Sigmoid colon (tissue), 7 donors: ENCODE measurements at regions of chr2 and their contacts with region 1.

Region 1: GRCh38 chr2:205892251-205892655 is 193.7 kb downstream of the INO80D start:
- DNase-seq: peak; percentile 88
- H3K4me3 ChIP-seq: peak overlapping the region in 1 of 4 donors; percentile 12
- H3K27ac ChIP-seq: peak overlapping the region; percentile 43 to 77 (median 74)
- H3K4me1 ChIP-seq: peaks cover 0 to 43% (median 18%) of the 10 kb centered on the region in 4 donors
- H3K27me3 ChIP-seq: no peaks in the 10 kb centered on the region
- CTCF ChIP-seq: no peak
- EP300 ChIP-seq: no peak
- POLR2A ChIP-seq: no peak

Region 2: DNA sequence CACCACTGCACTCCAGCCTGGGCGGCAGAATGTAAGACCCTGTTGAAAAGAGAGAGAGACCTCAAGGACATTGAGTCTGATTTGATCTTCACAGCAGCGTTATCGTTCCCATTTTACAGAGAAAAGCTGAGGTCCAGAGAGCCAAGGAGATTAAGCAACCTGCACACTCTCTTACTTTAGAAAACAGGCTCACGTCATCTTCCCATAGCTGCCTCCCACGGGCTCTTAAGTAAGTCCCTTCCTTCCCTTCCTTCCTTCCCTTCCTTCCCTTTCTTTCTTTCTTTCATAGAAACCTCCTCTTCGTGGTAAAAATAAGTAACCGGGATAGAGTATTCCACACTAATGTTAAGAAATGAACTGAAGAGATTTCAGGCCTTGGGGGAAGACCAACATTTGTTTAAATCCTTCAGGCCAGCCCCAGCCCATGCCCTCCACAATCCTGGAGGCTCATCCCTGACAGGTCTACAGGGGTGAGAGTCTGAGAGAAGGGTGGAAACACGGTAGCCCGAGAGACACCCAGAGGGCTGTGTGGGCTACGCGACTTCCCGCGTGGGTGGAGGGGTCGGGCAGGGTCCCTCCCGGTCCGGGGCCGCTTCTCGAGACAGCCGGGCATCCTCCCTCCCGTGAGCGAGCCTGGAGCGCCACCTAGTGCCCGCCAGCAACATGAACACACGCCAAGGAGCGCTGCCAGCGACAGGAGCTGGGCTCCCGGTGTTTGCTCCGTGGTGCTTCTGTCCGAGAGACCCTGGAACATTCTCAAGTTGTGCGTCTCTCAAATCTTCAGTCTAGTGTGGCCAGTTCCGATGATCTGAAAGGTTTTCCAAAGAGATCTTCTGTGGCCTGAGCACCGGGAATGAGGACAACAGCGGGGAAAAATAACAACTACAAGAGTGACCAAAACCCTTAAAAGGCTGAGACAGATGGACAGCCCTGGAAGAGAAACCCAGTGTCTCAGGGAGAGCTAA is 33.4 kb after region 1 on chr2:
- intact Hi-C with region 1: loop called (anchors 5 kb)
- DNase-seq: peak; percentile 92
- H3K4me3 ChIP-seq: peak overlapping the region in 3 of 4 donors; percentile 26 to 41 (median 35)
- H3K27ac ChIP-seq: peak overlapping the region in 3 of 4 donors; percentile 53 to 69 (median 58)
- H3K4me1 ChIP-seq: peaks cover 0 to 18% (median 11%) of the 10 kb centered on the region in 4 donors
- H3K27me3 ChIP-seq: no peaks in the 10 kb centered on the region
- CTCF ChIP-seq: peak; percentile 89 to 96 (median 94)
- EP300 ChIP-seq: no peak
- POLR2A ChIP-seq: no peak

Region 3: DNA sequence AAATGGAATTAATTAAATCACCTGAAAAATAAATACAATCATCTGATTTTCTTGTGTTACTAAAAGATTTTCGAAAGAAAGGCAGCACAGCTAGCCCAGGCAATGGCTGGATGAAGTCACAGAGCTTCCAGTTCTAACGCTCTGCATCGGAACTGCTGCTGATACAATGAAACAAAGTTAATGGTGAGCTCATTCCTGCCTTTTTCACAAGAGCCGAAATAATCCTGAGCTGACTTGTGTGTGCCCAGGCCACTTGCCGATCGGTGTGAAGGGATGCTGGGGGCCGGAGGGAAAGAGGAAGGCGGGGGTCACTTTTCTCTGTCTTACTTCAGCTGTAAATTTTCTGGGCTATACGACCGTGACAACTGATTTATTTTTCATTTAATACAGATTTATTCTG is 44.2 kb after region 1 on chr2:
- intact Hi-C with region 1: no loop called
- DNase-seq: peak; percentile 13
- H3K4me3 ChIP-seq: no peak overlapping the region
- H3K27ac ChIP-seq: no peak overlapping the region
- H3K4me1 ChIP-seq: no peaks in the 10 kb centered on the region
- H3K27me3 ChIP-seq: no peaks in the 10 kb centered on the region
- CTCF ChIP-seq: no peak
- EP300 ChIP-seq: no peak
- POLR2A ChIP-seq: no peak

Region 4: DNA sequence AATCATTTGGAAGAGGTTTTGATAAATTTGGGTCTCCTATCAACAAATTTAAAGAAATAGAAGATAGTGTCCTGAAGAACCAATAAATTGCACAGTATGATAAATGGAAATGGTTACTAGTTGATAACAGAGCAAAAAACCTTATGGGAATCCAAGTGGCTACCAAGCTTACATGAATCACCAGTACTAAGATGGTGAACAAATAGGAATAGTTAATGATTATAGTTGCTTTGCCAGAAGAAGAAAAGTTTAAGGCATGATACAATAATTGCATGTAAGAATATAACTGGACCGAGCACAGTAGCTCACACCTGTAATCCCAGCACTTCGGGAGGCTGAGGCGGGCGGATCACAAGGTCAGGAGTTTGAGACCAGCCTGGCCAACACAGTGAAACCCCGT is 213.3 kb after region 1 on chr2:
- intact Hi-C with region 1: no loop called
- DNase-seq: no peak
- H3K4me3 ChIP-seq: no peak overlapping the region
- H3K27ac ChIP-seq: no peak overlapping the region
- H3K4me1 ChIP-seq: no peaks in the 10 kb centered on the region
- H3K27me3 ChIP-seq: no peaks in the 10 kb centered on the region
- CTCF ChIP-seq: no peak
- EP300 ChIP-seq: no peak
- POLR2A ChIP-seq: no peak